Naive thymus-derived CD8-positive, alpha-beta T cell (primary cell): ENCODE measurements at regions of chr12 and their contacts with region 1.

Region 1: GRCh38 chr12:76763743-76764675 is at the start of gene ZDHHC17:
- DNase-seq: peak; percentile 89 to 95 (median 94)
- ATAC-seq: peak; percentile 83 to 86
- H3K4me3 Mint-ChIP-seq: peak within 1 kb of the TSS; percentile 95 to 99 (median 97)
- H3K27ac Mint-ChIP-seq: peak within 1 kb of the TSS; percentile 94 to 99 (median 98)
- H3K4me1 Mint-ChIP-seq: peaks cover 13 to 57% (median 49%) of the 10 kb centered on the region in 4 donors
- H3K27me3 Mint-ChIP-seq: no peaks in the 10 kb centered on the region
- polyA plus RNA-seq, gene ZDHHC17: 10.1 to 11.5 (median 10.5) TPM

Region 2: GRCh38 chr12:76706101-76706500 is 57.9 kb before region 1 on chr12:
- POLR2A ChIA-PET with region 1: no interaction called
- DNase-seq: peak in 2 of 10 donors; percentile 7 to 8
- ATAC-seq: peak in 1 of 2 donors; percentile 53
- H3K4me3 Mint-ChIP-seq: no peak overlapping the region
- H3K27ac Mint-ChIP-seq: no peak overlapping the region
- H3K4me1 Mint-ChIP-seq: peaks cover 0 to 8% (median 5%) of the 10 kb centered on the region in 4 donors
- H3K27me3 Mint-ChIP-seq: peaks cover 0 to 10% (median 2%) of the 10 kb centered on the region in 5 donors

Region 3: GRCh38 chr12:76820888-76821482 is 57.0 kb after region 1 on chr12:
- POLR2A ChIA-PET with region 1: interaction called, 10 read pairs
- DNase-seq: no peak
- ATAC-seq: no peak
- H3K4me3 Mint-ChIP-seq: no peak overlapping the region
- H3K27ac Mint-ChIP-seq: no peak overlapping the region
- H3K4me1 Mint-ChIP-seq: peaks cover 0 to 2% (median 0%) of the 10 kb centered on the region in 4 donors
- H3K27me3 Mint-ChIP-seq: no peaks in the 10 kb centered on the region